Heart right ventricle (tissue), 16 donors: ENCODE measurements at regions of chr9 and their contacts with region 1.

Region 1: GRCh38 chr9:131046581-131047202 is 37.7 kb downstream of the LAMC3 start:
- DNase-seq: peak; percentile 39 to 69
- ATAC-seq: peak; percentile 80 to 90 (median 84)
- H3K4me3 ChIP-seq: no peak overlapping the region
- H3K27ac ChIP-seq: no peak overlapping the region
- H3K4me1 ChIP-seq: peaks cover 0 to 7% (median 0%) of the 10 kb centered on the region in 9 donors
- H3K27me3 ChIP-seq: peaks cover 0 to 6% (median 0%) of the 10 kb centered on the region in 7 donors
- CTCF ChIP-seq: peak; percentile 77 to 97 (median 94)

Region 2: DNA sequence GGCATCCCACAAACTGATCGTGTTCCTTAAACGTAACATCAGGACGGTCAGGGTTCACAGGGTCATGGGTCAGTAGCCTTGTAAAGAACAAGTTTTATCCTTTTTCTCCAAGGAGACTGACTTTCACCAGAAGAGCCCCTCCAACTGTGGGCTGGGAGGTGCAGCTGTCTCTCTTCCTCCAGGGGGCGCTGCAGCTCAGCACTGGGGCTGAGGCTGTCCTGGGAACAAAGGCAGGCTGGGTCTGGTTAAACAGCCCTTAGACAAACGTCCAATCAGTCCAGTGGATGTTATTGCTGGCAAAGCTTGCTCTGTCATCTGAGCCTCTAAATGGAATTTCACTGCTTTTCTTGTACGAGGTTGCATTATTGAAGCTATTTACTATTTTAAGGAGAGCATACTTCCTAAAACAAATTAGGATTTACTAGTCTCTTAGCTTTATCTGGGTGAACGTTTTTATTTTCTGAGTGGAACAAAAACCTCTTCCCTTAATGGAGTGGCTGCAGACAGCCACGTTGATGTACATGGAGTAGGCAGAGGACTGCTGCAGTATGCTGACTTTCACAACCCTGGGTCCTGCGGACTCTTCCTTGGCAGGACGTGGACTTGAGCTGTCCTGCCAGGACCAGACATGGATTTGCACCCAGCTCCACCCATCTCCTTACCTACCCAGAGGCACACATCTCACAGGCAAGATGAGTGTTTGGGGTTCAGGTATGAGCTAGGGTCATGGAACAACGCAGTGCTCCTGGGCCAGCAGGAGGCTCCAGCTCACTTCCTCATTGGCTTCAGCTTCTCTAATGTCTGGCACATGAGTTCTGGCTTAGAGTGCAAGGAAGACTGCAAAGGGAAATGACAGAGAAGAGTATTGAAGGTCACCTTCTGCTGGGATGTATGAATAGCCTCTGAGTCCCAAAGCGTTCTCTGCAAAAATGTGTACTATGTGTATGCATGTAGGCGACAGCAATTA is 345.4 kb before region 1 on chr9:
- intact Hi-C with region 1: loop called (anchors 2 to 10 kb)
- DNase-seq: peak; percentile 77 to 85
- ATAC-seq: peak; percentile 85 to 97 (median 94)
- H3K4me3 ChIP-seq: no peak overlapping the region
- H3K27ac ChIP-seq: peak overlapping the region in 2 of 10 donors; percentile 37 to 65
- H3K4me1 ChIP-seq: peaks cover 0 to 18% (median 6%) of the 10 kb centered on the region in 9 donors
- H3K27me3 ChIP-seq: no peaks in the 10 kb centered on the region
- CTCF ChIP-seq: peak; percentile 81 to 98 (median 95)

Region 3: GRCh38 chr9:130860458-130861316 is 186.0 kb before region 1 on chr9:
- intact Hi-C with region 1: loop called in 4 of 10 experiments (anchors 5 to 10 kb)
- DNase-seq: peak; percentile 79 to 88
- ATAC-seq: peak; percentile 89 to 95 (median 94)
- H3K4me3 ChIP-seq: peak overlapping the region in 5 of 10 donors; percentile 0 to 14 (median 6)
- H3K27ac ChIP-seq: peak overlapping the region in 9 of 10 donors; percentile 50 to 86 (median 75)
- H3K4me1 ChIP-seq: peaks cover 13 to 69% (median 45%) of the 10 kb centered on the region in 9 donors
- H3K27me3 ChIP-seq: no peaks in the 10 kb centered on the region
- CTCF ChIP-seq: peak in 8 of 9 donors; percentile 36 to 81 (median 58)

Region 4: DNA sequence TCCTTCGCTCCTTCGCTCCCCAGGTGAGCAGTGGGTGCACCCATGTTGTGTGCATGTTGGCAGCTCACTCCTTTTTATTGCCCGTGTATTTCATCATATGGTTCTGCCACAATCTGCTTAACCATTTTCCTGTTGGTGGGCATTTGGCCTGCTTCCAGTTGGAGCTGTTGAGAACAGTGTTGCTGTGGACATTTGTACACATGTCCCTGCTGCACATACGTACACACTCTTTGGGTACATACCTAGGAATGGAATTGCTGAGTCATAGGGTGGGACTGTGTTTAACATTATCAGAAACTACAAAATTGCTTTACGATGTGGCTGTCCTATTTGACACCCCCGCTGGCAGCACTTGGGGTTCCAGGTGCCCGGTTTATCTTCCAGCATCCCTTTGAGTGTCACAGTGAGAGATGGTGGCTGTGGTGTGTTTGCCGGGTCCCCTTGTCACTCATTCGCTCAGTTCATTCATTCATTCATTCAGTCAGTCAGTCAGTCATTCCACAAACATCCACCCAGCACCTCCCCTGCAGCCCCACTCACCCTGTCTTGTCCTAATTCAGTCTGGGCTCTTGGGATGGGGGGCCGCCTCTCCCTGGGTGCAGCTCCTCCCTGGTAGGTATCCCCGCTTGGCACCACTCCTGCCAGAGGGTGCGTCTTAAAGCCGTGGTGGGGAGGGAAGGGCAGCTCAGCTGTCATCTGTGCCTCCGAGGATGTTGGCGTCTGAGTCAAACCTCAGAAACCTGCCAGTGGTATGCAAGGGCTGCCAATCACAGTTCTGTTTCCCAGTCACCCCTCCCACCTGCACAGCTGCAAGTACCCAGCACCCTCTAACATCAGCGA is 99.7 kb before region 1 on chr9:
- intact Hi-C with region 1: no loop called
- DNase-seq: no peak
- ATAC-seq: no peak
- H3K4me3 ChIP-seq: no peak overlapping the region
- H3K27ac ChIP-seq: no peak overlapping the region
- H3K4me1 ChIP-seq: no peaks in the 10 kb centered on the region
- H3K27me3 ChIP-seq: peaks cover 0 to 34% (median 18%) of the 10 kb centered on the region in 7 donors
- CTCF ChIP-seq: no peak

Region 5: DNA sequence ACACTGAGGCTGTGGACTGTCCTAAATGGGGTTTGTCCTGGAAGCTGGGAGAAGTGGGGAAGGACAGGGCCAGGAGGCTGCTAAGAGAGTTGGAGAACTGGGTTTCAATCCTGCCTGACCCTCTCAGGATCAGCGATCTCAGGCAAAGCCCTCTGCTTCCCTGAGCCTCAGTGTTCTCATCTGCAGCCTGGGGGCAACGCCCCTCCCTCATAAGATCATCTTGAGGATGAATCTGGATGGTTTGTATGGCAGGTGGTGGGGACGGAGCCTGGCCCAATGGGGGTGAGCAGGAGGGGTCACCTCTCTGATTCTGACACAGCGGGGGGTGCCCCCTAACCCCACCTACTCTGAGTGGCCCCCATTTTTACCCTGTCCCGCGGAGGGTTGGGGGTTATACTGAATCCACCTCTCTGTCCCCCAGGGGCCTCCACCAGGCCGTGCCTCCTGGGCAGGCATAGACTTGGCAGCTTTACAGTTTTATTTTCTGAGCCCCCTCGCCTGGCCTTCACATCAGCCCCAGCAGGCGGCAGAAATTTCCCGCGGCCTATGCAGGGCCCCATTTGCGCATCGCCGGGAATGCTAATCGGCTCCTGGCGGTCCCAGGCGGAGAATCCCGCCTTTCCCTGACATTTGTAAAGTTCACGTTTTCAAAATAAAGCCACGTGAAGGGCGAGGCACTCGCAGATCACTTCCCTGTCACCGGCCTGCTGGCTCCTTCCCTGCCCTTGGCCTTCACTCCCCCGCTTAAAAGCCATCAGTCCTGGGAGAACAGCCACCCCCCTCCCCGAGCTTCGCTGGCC is 55.5 kb before region 1 on chr9:
- intact Hi-C with region 1: no loop called
- DNase-seq: no peak
- ATAC-seq: no peak
- H3K4me3 ChIP-seq: no peak overlapping the region
- H3K27ac ChIP-seq: no peak overlapping the region
- H3K4me1 ChIP-seq: peaks cover 0 to 11% (median 0%) of the 10 kb centered on the region in 9 donors
- H3K27me3 ChIP-seq: peaks cover 0 to 12% (median 7%) of the 10 kb centered on the region in 7 donors
- CTCF ChIP-seq: no peak

Region 6: DNA sequence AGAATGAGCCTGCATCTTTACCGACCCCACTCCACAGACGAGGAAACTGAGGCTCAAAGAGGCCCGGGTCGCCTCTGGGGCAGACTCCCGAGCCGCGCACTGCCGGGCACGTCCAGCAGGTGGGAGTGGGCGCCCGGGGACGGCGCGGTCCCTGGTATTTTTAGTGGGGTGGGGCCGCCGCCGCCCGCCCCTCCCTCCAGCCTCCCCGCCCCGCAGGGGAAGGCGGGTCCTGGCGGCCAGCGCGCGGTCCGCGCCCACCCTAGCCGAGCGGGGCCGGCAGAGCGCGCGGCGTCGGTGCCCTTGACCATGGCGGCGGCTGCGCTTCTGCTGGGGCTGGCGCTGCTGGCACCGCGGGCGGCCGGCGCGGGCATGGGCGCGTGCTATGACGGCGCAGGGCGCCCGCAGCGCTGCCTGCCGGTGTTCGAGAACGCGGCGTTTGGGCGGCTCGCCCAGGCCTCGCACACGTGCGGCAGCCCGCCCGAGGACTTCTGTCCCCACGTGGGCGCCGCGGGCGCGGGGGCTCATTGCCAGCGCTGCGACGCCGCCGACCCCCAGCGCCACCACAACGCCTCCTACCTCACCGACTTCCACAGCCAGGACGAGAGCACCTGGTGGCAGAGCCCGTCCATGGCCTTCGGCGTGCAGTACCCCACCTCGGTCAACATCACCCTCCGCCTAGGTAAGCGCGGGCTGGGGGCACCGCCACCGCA is 37.6 kb before region 1 on chr9 and contains the start of gene LAMC3:
- intact Hi-C with region 1: loop called in 2 of 10 experiments (anchors 2 to 5 kb)
- DNase-seq: no peak
- ATAC-seq: peak in 4 of 8 donors; percentile 33 to 49 (median 42)
- H3K4me3 ChIP-seq: peak within 1 kb of the TSS in 7 of 10 donors; percentile 4 to 40 (median 26)
- H3K27ac ChIP-seq: no peak within 1 kb of the TSS
- H3K4me1 ChIP-seq: peaks cover 0 to 9% (median 4%) of the 10 kb centered on the region in 9 donors
- H3K27me3 ChIP-seq: peaks cover 9 to 58% (median 38%) of the 10 kb centered on the region in 7 donors
- CTCF ChIP-seq: peak in 8 of 9 donors; percentile 18 to 53 (median 42)
- total RNA-seq, gene LAMC3: 0.11 to 5.4 (median 0.30) TPM in 9 of 10 donors, not detected in the other

Region 7: DNA sequence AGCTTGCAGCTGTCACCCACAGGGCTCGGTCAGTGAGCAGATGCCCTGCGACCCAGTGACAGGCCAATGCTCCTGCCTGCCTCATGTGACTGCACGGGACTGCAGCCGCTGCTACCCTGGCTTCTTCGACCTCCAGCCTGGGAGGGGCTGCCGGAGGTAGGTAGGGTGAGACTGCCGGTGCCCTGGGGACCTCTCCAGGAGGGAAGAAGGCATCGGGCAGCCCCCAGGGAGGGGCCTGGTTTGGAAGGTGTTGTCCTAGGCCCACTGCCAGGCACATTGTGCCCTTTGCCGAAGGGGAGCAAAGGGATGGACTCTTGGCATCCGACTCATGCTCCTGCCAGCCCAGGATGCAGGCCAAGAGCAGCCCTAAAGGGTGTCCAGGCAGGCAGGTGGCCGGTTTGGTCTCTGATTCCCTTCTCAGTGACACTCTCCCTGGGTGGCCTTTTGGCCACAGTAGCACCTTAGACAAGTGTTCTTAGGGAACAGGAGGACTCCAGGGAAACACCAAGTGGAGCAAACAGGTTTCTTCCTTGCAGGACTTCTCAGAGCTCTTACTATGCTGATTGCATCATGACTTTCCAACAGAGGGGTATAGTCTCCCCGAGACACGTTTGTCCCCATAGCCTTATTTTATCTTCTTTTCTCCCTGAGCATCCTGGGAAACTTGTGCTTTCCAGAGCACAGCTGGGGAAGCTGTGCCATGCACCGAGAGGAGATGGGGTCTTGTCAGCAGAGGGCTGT is 21.6 kb after region 1 on chr9:
- intact Hi-C with region 1: no loop called
- DNase-seq: no peak
- ATAC-seq: peak in 6 of 8 donors; percentile 30 to 85 (median 44)
- H3K4me3 ChIP-seq: no peak overlapping the region
- H3K27ac ChIP-seq: no peak overlapping the region
- H3K4me1 ChIP-seq: peaks cover 0 to 10% (median 0%) of the 10 kb centered on the region in 9 donors
- H3K27me3 ChIP-seq: no peaks in the 10 kb centered on the region
- CTCF ChIP-seq: no peak